ENCODE measurements at regions of chr1 and their contacts with region 1.

Region 1: GRCh38 chr1:16078925-16079656 is 5.6 kb upstream of the FAM131C start:
- DNase-seq: peak; percentile 60
- H3K27ac ChIP-seq: peak overlapping the region; percentile 67
- CTCF ChIP-seq: peak; percentile 87

Region 2: DNA sequence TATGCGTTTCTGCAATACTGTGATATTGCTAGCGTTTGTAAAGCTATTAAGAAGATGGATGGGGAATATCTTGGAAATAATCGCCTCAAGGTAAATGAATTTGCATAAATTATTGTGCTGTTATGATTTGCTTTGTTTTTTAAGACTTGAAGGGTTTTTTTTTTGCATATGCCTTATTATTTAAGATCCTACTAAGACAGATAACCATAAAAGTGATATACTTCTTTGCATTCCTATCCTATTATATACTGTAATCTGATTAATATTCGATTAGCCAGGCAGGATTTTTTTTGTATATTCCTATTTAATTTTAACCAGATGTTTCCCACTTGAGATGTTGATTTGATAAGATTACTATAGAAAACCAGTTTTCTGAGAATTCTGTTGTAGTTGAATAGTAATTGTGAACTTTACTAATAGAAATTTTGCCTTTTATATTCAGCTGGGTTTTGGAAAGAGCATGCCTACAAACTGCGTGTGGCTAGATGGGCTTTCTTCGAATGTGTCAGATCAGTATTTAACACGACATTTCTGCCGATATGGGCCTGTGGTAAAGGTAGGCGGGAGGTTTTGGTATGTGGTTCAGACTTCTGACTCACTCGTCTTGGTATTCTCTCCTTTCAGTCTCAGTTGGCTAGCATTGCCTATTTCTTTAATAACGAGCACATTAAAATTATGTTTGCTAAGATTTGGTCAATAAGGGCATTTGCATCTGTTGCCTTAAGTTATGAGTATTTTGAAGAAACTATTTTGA is 160.0 kb before region 1 on chr1:
- CTCF ChIA-PET with region 1: no interaction called
- POLR2A ChIA-PET with region 1: no interaction called
- DNase-seq: peak; percentile 72
- H3K27ac ChIP-seq: no peak overlapping the region
- CTCF ChIP-seq: no peak

Region 3: GRCh38 chr1:15949453-15950245 is 129.4 kb before region 1 on chr1:
- CTCF ChIA-PET with region 1: no interaction called
- POLR2A ChIA-PET with region 1: no interaction called
- DNase-seq: peak; percentile 95
- H3K27ac ChIP-seq: peak overlapping the region; percentile 100
- CTCF ChIP-seq: no peak

Region 4: DNA sequence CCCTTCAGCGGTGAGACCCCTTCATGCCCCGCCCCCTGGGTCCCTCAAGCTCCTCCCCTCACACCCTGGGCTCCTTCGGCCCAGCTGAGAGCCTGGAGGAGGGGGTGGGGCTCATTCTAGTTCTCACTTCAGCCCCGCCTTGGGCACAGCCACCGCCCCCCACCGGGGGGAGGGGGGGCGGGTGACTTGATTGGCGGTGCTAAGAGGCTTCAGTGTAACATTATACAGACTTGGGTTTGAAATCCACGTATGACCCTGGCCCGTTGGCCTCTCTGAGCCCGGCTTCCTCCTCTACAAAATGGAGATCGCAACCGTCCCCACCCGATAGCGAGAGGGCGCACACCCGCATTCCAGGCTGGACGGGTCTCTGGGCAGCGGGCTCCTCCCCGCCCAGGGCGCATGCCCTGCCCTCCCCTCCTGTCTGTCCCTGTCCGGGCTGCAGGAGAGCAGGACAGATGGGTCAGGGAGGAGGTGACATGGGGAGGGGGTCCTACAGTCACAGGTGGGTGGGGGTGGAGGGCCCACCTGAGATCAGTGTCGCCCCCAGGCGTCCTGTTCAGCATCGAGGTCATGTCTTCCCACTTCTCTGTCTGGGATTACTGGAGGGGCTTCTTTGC is 30.4 kb before region 1 on chr1:
- CTCF ChIA-PET with region 1: no interaction called
- POLR2A ChIA-PET with region 1: no interaction called
- DNase-seq: no peak
- H3K27ac ChIP-seq: no peak overlapping the region
- CTCF ChIP-seq: no peak

Region 5: DNA sequence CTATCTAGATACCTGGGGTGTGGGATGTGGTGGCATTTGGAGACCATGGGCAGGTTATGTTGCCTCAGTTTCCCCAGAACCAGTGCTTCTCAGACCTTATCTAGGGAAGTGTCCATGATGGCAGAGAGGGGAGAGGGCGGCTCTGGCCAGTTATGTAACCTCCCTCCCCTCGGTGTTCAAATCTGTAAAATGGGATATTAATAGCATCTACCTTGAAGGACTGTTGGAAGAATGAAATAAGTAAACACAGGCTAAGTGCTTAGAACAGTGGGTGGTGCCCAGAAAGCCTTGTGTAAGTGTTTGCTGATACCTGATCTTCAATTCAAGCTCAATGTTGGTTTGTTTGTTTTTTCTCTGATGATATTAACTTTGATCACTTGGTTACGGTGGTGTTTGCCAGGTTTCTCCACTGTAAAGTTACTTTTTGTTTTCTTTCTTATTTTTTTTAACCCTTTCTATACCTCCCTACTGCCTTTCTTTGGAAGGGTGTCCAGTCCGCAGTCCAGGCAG is 41.9 kb after region 1 on chr1:
- CTCF ChIA-PET with region 1: interaction called, 11 read pairs
- POLR2A ChIA-PET with region 1: no interaction called
- DNase-seq: no peak
- H3K27ac ChIP-seq: peak overlapping the region; percentile 80
- CTCF ChIP-seq: no peak

Region 6: DNA sequence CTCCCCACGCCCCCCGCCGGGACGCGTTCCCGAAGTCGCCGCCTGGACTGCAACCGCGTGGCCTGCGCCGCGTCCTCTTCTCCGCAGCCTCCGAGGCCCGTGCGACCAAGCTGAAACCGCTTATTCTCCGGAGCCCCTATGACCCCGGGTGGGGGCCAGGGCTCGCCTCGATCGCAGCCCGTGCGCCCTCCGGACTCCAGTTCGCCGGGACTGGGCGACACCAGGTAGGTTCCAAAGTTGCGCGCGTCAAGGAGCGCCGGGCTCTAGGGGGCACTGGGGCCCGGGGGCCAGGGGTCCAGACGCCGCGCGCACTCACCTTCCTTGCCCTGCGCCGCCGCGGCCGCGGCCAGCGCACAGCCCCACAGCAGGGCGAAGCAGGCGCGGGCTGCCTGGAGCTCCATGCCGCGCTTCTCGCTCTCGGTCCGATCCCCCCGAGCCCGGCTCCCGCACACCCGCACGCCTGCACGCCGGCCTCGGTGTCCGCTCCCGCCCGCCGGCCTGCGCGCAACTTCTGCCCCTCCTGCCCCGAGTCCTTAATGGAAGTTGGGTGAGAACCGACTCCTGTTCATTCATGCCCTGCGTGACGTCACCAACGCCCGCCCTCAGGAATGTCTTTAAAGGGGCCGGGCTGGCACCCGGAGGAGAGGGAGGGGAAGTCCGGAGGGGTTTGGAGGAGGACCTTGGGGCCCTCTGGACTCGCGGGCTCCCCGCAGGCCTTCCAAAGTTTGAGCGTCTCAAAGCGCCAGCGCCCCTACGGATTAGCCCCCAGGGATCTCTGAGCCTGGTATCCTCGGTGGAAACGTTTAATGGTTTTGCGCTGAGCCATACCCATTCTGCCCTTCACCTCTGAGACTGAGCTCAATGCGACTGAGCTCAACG is 76.7 kb after region 1 on chr1 and contains the start of gene EPHA2:
- CTCF ChIA-PET with region 1: interaction called, 22 read pairs
- POLR2A ChIA-PET with region 1: no interaction called
- DNase-seq: peak; percentile 91
- H3K27ac ChIP-seq: peak within 1 kb of the TSS; percentile 99
- CTCF ChIP-seq: no peak

Region 7: DNA sequence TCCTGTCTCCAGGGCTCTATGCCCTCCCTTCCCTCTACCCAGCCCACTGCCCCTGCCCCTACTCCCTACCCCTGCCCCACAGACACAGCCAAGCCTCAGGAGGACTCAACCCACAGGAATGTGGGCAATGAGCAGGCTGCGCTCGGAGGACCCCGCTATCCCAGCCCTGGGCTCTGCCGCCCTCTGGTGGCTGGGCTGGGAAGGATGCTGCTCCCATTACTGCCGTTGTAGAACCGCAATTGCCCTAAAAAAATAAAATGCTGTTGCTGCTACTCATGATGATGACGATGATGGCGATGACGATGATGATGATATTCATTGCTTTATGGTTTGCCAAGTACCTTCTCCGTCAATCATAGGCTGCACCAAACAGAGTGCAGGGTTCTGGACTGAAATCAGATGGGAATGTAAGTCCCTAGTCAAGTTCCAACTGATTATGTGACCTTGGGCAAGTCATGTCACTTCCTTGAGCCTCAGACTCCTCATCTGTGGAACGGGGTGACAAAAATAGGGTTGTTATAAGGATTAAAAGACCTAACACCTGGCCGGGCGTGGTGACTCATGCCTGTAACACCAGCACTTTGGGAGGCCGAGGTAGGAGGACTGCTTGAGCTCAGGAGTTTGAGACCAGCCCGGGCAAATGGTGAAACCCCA is 108.8 kb after region 1 on chr1:
- CTCF ChIA-PET with region 1: interaction called, 29 read pairs
- POLR2A ChIA-PET with region 1: interaction called, 3 read pairs
- DNase-seq: peak; percentile 77
- H3K27ac ChIP-seq: peak overlapping the region; percentile 98
- CTCF ChIP-seq: peak; percentile 95

Region 8: GRCh38 chr1:16243936-16244649 is 165.0 kb after region 1 on chr1:
- CTCF ChIA-PET with region 1: interaction called, 17 read pairs
- POLR2A ChIA-PET with region 1: no interaction called
- DNase-seq: peak; percentile 84
- H3K27ac ChIP-seq: peak overlapping the region; percentile 29
- CTCF ChIP-seq: peak; percentile 89